ENCODE measurements at regions of chr17 and their contacts with region 1.

Region 1: DNA sequence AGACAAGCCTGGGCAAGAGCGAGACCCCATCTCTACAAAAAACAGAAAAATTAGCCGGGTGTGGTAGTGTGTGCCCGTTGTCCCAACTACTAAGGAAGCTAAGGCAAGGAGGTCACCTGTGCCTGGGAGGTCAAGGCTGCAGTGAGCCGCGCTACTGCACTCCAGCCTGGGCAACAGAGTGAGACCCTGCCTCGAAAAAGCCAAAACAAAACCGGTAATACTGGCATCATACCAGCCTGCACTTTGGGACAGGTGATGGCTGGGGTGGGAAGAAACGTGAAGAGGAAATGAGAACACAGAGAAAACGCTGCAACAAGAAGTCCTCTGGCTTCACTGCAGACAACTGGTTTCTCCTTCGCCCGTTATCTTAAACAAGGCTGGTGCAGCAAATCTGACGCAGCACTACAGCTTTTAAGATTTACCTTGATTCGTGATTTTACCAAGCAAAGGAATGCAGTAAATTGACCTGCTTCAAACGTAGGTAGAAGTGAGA is 725 bp upstream of the CASC3 start:
- DNase-seq: no peak
- H3K4me3 ChIP-seq: peak overlapping the region; percentile 13 to 93 (median 88)
- H3K27ac ChIP-seq: peak overlapping the region; percentile 83 to 89
- H3K4me1 ChIP-seq: peaks cover 9 to 23% (median 18%) of the 10 kb centered on the region in 4 experiments
- H3K27me3 ChIP-seq: no peaks in the 10 kb centered on the region

Region 2: DNA sequence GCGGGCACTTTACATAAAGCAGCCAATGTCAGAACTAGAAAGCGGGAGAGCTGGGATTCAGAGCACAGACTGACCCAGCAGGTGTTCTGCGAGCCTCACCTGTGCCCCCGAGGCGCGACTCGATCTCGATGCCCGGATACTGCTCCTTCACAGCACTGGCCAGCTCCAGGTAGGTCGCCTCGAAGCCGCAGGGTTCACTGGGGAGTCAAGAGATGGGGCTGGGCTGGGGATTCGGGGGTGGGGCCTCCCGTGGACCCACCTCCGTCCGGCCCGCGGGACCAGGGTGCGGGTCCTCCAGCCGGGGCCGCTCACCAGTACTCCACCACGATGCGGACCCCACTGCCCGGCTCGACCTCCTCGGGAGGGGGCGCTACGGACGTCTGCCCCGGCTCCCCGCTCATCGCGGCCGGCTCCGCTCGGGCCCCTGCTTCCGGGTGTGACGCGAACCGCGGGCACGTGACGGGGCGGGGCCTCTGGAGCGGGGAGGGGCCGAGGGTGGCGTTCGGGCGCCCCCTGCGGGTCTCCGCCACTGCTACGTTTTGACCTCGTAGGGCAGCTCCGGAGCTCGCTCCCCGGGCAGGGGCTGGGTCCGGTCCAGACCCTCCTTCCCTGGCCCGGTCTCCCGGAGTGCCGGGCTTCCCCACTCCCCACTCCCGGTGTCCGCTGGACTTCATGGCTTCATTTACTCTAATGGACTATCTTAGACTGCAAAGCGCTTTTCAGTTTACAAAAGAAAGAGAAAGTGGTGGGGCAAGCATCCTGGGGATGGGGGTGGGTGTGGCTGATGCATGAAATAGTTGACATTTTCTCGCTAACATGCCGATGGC is 409.3 kb before region 1 on chr17 and contains the start of gene MIEN1:
- CTCF ChIA-PET with region 1: no interaction called
- POLR2A ChIA-PET with region 1: no interaction called
- DNase-seq: peak; percentile 80 to 86 (median 85)
- H3K4me3 ChIP-seq: peak within 1 kb of the TSS; percentile 59 to 93 (median 81)
- H3K27ac ChIP-seq: peak within 1 kb of the TSS; percentile 85 to 86
- H3K4me1 ChIP-seq: peaks cover 5 to 13% (median 8%) of the 10 kb centered on the region in 4 experiments
- H3K27me3 ChIP-seq: peaks cover 0 to 4% (median 2%) of the 10 kb centered on the region in 5 experiments

Region 3: DNA sequence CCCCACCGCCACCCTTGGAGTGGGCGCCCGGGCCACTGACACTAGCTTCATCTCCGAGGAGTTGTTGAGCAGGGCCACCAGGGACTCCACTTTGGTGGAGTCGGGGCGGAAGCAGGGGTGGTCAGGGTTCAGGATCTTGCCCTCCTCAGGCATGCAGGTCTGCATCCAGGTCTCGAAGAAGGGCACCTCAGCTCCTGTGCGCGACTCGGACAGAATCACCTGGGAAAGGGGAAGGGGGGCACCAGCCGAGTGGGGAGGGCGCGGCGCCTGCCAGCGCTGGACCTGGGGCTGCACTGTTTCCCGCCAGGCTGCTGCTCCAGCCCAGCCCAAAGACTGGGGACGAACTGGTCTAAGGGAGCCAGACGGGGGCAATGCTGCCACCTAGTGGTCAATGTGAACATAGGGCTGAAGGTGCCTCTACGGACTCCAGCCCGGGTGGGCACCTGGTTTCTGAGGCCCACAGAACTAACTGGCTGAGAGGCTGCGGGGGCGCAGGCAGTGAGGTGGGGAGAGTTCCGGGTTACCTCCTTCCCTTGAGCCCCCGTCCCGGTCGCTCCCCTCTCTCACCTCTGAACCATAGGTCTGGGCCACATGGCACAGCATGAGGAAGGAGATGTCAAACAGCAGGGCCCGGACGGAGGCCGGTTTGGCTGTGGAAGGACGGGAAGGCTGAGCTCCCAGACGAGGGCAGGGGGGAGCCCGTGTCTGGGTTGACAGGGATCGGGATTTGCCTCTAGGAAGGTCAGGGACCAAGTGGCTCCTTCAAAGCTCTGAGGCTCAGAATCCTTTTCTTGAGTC is 112.6 kb before region 1 on chr17:
- CTCF ChIA-PET with region 1: no interaction called
- POLR2A ChIA-PET with region 1: no interaction called
- DNase-seq: peak; percentile 67 to 83 (median 75)
- H3K4me3 ChIP-seq: no peak overlapping the region
- H3K27ac ChIP-seq: no peak overlapping the region
- H3K4me1 ChIP-seq: peaks cover 0 to 6% (median 0%) of the 10 kb centered on the region in 4 experiments
- H3K27me3 ChIP-seq: no peaks in the 10 kb centered on the region

Region 4: GRCh38 chr17:40064971-40065768 is 74.4 kb before region 1 on chr17:
- CTCF ChIA-PET with region 1: no interaction called
- POLR2A ChIA-PET with region 1: no interaction called
- DNase-seq: no peak
- H3K4me3 ChIP-seq: peak overlapping the region in 4 of 7 experiments; percentile 20 to 94 (median 49)
- H3K27ac ChIP-seq: peak overlapping the region in 1 of 2 experiments; percentile 5
- H3K4me1 ChIP-seq: peaks cover 8 to 65% (median 63%) of the 10 kb centered on the region in 4 experiments
- H3K27me3 ChIP-seq: peaks cover 0 to 3% (median 0%) of the 10 kb centered on the region in 5 experiments

Region 5: GRCh38 chr17:40121181-40122135 is 18.2 kb before region 1 on chr17 and contains the start of gene MSL1:
- CTCF ChIA-PET with region 1: interaction called, 29 read pairs
- POLR2A ChIA-PET with region 1: interaction called, 6 read pairs
- DNase-seq: peak; percentile 72 to 86 (median 83)
- H3K4me3 ChIP-seq: peak within 1 kb of the TSS; percentile 80 to 98 (median 96)
- H3K27ac ChIP-seq: peak within 1 kb of the TSS; percentile 46 to 89
- H3K4me1 ChIP-seq: peaks cover 15 to 49% (median 39%) of the 10 kb centered on the region in 4 experiments
- H3K27me3 ChIP-seq: no peaks in the 10 kb centered on the region